H1 (cell line): ENCODE measurements at regions of chr4 and their contacts with region 1.

Region 1: DNA sequence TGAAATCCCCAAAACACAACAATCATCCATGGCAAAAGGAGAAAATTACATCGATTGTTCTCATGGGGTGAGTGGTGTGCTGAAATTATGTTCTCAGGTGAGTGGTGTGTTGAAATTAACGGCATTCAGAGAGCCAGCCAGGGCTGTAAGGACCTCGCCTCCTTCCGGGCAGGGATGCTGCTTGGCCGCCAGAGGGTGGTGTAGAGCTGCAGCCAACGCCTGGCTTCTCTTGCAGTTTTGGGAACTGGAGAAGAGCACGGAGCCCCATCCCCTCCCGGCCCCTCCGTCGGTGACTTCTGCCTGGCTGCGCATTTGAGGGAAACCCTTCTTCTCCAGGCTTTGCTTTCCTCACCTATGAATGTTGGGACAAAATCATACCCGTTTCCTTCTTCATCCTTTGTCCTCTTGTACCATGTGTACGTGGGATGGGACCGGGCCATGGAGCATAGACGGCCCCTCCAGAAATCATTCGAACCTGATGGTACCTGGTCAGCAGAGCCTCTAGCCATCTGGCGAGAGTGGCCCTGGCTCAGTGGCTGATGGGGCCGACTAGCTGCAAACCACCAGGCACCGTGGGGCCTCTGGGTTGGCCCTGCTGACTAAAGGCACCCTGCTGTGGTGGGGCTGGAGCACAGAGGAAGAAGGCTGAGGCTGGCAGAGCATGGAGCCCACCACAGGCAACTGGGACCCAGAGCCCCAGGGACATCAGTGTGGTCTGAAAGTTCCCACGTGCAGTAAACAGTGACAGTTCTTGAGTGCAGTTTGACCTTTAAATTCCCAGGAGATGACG is 28.4 kb downstream of the TRMT44 start:
- DNase-seq: peak; percentile 57 to 92
- H3K4me3 ChIP-seq: no peak overlapping the region
- H3K27ac ChIP-seq: no peak overlapping the region
- H3K4me1 ChIP-seq: peaks cover 0 to 5% (median 2%) of the 10 kb centered on the region in 4 experiments; a peak in 2 of 7 replicates
- H3K27me3 ChIP-seq: no peaks in the 10 kb centered on the region
- CTCF ChIP-seq: peak in 2 of 3 experiments; percentile 97 to 99; a peak in 3 of 4 replicates
- EP300 ChIP-seq: no peak
- POLR2A ChIP-seq: no peak
- RAD21 ChIP-seq: peak; percentile 98 to 99

Region 2: GRCh38 chr4:8478801-8479744 is 10.1 kb after region 1 on chr4:
- CTCF ChIA-PET with region 1: interaction called, 22 read pairs
- POLR2A ChIA-PET with region 1: interaction called, 4 read pairs
- DNase-seq: no peak
- H3K4me3 ChIP-seq: no peak overlapping the region
- H3K27ac ChIP-seq: no peak overlapping the region
- H3K4me1 ChIP-seq: peaks cover 0 to 3% (median 0%) of the 10 kb centered on the region in 4 experiments; a peak in 2 of 7 replicates
- H3K27me3 ChIP-seq: no peaks in the 10 kb centered on the region
- CTCF ChIP-seq: no peak
- EP300 ChIP-seq: no peak
- POLR2A ChIP-seq: no peak
- RAD21 ChIP-seq: no peak

Region 3: DNA sequence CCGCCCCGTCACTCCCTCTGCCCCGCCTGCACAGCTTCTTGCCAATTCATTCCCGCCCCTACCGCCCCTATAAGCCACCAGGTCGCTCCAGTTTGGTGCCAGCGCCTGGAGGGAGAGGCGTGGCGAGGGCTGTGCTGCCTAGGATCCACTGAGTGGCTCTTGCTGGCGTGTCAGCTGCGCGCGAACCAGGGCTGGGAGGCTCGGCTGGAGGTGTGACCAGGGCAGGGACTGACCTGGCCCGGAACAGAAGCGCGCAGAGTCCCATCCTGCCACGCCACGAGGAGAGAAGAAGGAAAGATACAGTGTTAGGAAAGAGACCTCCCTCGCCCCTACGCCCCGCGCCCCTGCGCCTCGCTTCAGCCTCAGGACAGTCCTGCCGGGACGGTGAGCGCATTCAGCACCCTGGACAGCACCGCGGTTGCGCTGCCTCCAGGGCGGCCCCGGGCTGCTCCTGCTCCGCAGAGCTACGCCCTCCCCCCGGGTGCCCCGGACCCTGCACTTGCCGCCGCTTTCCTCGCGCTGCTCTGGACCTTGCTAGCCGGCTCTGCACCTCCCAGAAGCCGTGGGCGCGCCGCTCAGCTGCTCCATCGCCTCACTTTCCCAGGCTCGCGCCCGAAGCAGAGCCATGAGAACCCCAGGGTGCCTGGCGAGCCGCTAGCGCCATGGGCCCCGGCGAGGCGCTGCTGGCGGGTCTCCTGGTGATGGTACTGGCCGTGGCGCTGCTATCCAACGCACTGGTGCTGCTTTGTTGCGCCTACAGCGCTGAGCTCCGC is 111.6 kb after region 1 on chr4 and contains the start of gene GPR78:
- CTCF ChIA-PET with region 1: interaction called, 66 read pairs
- POLR2A ChIA-PET with region 1: interaction called, 3 read pairs
- DNase-seq: peak; percentile 73 to 99
- H3K4me3 ChIP-seq: peak within 1 kb of the TSS in 3 of 4 experiments; percentile 29 to 56 (median 40); a peak in 7 of 8 replicates
- H3K27ac ChIP-seq: no peak within 1 kb of the TSS
- H3K4me1 ChIP-seq: peaks cover 0 to 24% (median 18%) of the 10 kb centered on the region in 4 experiments; a peak in 6 of 7 replicates
- H3K27me3 ChIP-seq: peaks cover 3 to 16% (median 15%) of the 10 kb centered on the region in 4 experiments
- CTCF ChIP-seq: no peak
- EP300 ChIP-seq: no peak
- POLR2A ChIP-seq: 0 out of 3 replicates have a peak, but pooled peaks of 1 of the 2 experiments have one; percentile 34
- RAD21 ChIP-seq: no peak
- total RNA-seq, gene GPR78: 3.0 and 3.3 TPM in 2 replicates

Region 4: DNA sequence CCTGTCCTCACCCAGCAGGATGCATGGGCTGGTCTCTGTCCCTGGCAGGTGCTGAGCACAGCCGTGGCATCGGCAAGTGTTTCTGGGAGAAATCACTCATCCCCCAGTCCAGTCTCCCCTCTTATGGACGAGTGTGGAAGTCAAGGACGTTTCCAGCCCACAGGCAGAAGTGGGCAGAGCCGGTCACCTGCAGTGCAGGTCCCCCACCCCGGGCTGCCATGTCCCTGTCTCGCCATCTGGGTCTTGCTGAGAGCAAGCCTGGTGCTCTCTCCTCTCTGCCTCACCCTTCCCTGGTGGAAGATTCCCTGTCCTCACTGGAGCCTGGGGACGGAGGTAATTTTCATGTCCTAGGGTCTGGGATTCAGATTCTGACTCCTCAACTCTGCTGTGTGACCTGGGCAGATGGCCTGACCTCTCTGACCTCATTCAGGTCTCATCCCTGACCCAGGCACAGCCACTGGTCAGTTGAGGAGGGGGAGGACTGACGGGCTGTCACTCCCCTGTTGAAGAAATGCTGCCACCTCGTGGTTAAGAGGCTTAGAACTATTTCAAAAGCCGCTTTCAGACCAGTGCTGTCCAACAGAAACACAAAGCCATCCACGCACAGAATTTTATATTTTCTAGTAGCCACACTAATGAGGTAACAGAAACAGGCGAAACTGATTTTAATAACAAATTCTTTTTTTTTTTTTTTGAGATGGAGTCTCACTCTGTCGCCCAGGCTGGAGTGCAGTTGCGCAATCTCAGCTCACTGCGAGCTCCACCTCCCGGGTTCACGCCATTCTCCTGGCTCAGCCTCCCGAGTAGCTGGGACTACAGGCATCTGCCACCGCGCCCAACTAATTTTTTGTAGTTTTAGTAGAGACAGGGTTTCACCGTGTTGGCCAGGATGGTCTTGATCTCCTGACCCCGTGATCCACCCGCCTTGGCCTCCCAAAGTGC is 125.4 kb after region 1 on chr4:
- CTCF ChIA-PET with region 1: interaction called, 66 read pairs
- POLR2A ChIA-PET with region 1: interaction called, 7 read pairs
- DNase-seq: peak in 1 of 2 experiments; percentile 77
- H3K4me3 ChIP-seq: peak overlapping the region in 1 of 4 experiments; percentile 78; a peak in 2 of 8 replicates
- H3K27ac ChIP-seq: no peak overlapping the region
- H3K4me1 ChIP-seq: peaks cover 0 to 24% (median 20%) of the 10 kb centered on the region in 4 experiments; a peak in 6 of 7 replicates
- H3K27me3 ChIP-seq: 0 out of 7 replicates have a peak, but pooled peaks cover 0 to 3% (median under 1%) of the 10 kb centered on the region in 4 experiments
- CTCF ChIP-seq: peak in 2 of 3 experiments; percentile 79 to 84; a peak in 3 of 4 replicates
- EP300 ChIP-seq: no peak
- POLR2A ChIP-seq: no peak
- RAD21 ChIP-seq: peak; percentile 90 to 95

Region 5: DNA sequence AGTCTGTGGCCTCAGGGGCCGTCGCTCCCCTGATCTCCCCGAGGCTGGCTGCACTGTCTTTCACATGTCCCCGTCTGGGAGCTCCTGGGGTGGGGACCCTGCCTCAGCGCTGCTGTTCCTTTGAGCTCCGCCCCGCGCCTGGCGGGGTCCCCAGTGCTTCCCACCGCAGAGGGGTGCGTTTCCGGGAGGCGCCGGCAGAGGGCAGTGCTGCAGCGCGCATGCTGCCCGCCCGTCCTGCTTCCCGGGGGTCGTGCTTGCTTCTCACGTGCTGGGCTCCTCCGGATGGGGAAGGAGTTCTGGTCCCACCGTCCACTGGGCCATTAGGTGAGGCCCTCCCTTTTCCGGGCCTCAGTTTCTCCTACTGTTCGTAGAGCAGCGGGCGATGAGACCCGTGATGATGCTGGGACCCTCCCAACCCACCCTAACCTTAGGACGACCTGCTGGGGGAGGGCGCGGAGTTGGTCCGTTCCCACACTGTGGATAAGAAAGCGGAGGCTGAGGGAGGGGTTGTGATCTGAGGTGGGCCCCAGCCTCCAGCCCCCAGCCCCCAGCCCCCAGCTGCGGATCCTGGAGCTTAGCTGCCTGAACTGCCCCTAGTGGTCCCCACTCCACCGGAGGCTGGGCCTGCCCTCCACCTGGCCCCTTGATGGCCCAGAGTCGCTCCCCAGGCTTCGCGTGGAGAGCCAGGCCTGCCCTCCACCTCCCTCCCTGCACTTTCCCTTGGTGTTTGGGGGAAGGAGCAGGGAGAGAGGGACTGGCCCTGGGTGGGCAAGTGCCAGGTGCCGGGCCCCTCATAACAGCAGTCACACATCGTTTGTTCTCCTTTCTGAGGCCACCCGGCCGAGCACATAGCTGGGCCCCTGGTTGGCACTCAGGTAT is 138.9 kb after region 1 on chr4:
- CTCF ChIA-PET with region 1: interaction called, 17 read pairs
- POLR2A ChIA-PET with region 1: interaction called, 3 read pairs
- DNase-seq: peak; percentile 21 to 99
- H3K4me3 ChIP-seq: no peak overlapping the region
- H3K27ac ChIP-seq: no peak overlapping the region
- H3K4me1 ChIP-seq: peaks cover 0 to 2% (median 0%) of the 10 kb centered on the region in 4 experiments; a peak in 1 of 7 replicates
- H3K27me3 ChIP-seq: no peaks in the 10 kb centered on the region; a peak in 1 of 7 replicates
- CTCF ChIP-seq: peak in 2 of 3 experiments; percentile 95 to 96; a peak in 3 of 4 replicates
- EP300 ChIP-seq: no peak
- POLR2A ChIP-seq: no peak
- RAD21 ChIP-seq: peak; percentile 79 to 85